ENCODE measurements at regions of chr18 and their contacts with region 1.

Region 1: DNA sequence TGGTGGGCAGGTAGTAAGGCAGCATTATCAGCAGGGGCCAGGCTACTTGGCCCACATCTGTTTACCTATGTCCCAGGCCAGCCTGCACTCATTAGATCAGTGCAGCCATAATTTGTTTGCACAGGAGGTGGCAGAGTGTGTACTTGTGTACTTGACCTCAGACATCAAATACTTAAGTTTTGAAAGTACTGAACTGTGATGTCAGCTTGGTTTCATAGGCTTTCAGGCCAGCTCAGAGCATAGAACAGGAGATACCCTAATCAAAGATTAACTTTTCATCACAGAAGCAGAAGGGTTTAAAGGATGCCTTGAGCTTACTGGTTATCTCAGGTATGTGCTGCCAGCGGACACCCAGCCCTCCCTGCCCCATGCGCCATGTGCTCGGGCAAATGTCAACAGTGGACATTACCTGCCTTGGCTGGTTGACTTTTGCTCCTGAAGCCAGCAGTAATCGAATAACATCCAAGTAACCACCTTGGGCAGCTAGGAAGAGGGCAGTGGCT is 33.2 kb downstream of the ANKRD29 start:
- DNase-seq: no peak
- ATAC-seq: no peak
- H3K4me3 ChIP-seq: no peak overlapping the region
- H3K4me3 Mint-ChIP-seq: no peak overlapping the region
- H3K27ac ChIP-seq: no peak overlapping the region
- H3K27ac Mint-ChIP-seq: no peak overlapping the region
- H3K4me1 ChIP-seq: no peaks in the 10 kb centered on the region
- H3K4me1 Mint-ChIP-seq: peaks cover 0 to 7% (median 0%) of the 10 kb centered on the region in 3 donors
- H3K27me3 ChIP-seq: peaks cover 0 to 10% of the 10 kb centered on the region in 2 experiments
- H3K27me3 Mint-ChIP-seq: peaks cover 0 to 3% of the 10 kb centered on the region in 2 donors

Region 2: GRCh38 chr18:23779696-23780303 is 150.3 kb after region 1 on chr18:
- CTCF ChIA-PET with region 1: interaction called in 1 of 2 experiments, 13 read pairs
- POLR2A ChIA-PET with region 1: no interaction called
- DNase-seq: no peak
- ATAC-seq: no peak
- H3K4me3 ChIP-seq: no peak overlapping the region
- H3K4me3 Mint-ChIP-seq: no peak overlapping the region
- H3K27ac ChIP-seq: no peak overlapping the region
- H3K27ac Mint-ChIP-seq: no peak overlapping the region
- H3K4me1 ChIP-seq: no peaks in the 10 kb centered on the region
- H3K4me1 Mint-ChIP-seq: peaks cover 0 to 7% (median 0%) of the 10 kb centered on the region in 3 donors
- H3K27me3 ChIP-seq: peaks cover 0 to under 1% of the 10 kb centered on the region in 2 experiments
- H3K27me3 Mint-ChIP-seq: peaks cover 11 to 13% of the 10 kb centered on the region in 2 donors

Measured in T-cell (primary cell).